ENCODE measurements at regions of chr5 and their contacts with region 1.

Region 1: GRCh38 chr5:131640043-131640856 is 5.2 kb upstream of the RAPGEF6 start:
- DNase-seq: peak; percentile 62
- ATAC-seq: no peak
- H3K4me3 ChIP-seq: no peak overlapping the region
- H3K27ac ChIP-seq: no peak overlapping the region
- H3K4me1 ChIP-seq: peaks cover 3% of the 10 kb centered on the region
- H3K27me3 ChIP-seq: no peaks in the 10 kb centered on the region
- CTCF ChIP-seq: no peak
- POLR2A ChIP-seq: no peak
- RAD21 ChIP-seq: no peak

Region 2: DNA sequence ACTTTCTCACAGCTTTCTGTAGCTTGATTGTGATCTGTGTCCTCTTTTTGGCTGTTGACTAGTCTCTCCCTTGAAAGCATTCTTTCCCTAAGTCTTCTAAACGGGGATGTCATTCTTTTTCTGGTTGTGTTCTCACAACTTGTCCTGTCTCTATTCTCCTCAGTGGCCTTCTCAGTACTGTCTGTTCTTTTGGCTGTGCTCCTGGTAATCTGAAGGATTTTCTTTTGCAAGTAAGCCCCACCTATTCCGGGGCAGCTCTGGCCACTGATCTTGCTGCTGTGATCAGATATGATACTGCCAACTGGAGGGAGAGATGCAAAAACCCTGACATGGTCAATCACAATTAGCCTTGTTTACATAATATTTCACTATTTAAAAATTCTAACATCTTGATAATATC is 204.2 kb before region 1 on chr5:
- CTCF ChIA-PET with region 1: no interaction called
- POLR2A ChIA-PET with region 1: no interaction called
- dilution Hi-C with region 1: no loop called
- in situ Hi-C with region 1: no loop called
- intact Hi-C with region 1: loop called (anchors 10 kb)
- DNase-seq: no peak
- ATAC-seq: no peak
- H3K4me3 ChIP-seq: no peak overlapping the region
- H3K27ac ChIP-seq: no peak overlapping the region
- H3K4me1 ChIP-seq: 0 out of 2 replicates have a peak, but pooled peaks cover 4% of the 10 kb centered on the region
- H3K27me3 ChIP-seq: no peaks in the 10 kb centered on the region
- CTCF ChIP-seq: no peak
- POLR2A ChIP-seq: no peak
- RAD21 ChIP-seq: no peak

Region 3: GRCh38 chr5:131514316-131515283 is 125.7 kb before region 1 on chr5:
- CTCF ChIA-PET with region 1: no interaction called
- POLR2A ChIA-PET with region 1: no interaction called
- dilution Hi-C with region 1: no loop called
- in situ Hi-C with region 1: no loop called
- intact Hi-C with region 1: no loop called
- DNase-seq: peak; percentile 67
- ATAC-seq: peak; percentile 94
- H3K4me3 ChIP-seq: no peak overlapping the region
- H3K27ac ChIP-seq: no peak overlapping the region
- H3K4me1 ChIP-seq: peaks cover 9% of the 10 kb centered on the region
- H3K27me3 ChIP-seq: no peaks in the 10 kb centered on the region
- CTCF ChIP-seq: peak; percentile 28
- POLR2A ChIP-seq: no peak
- RAD21 ChIP-seq: peak; percentile 12; the same call in 1 of the 2 replicates

Measured in IMR-90 (cell line).